ENCODE measurements at regions of chr5 and their contacts with region 1.

Region 1: GRCh38 chr5:137778772-137779564 is 24.8 kb upstream of the HNRNPA0 start:
- DNase-seq: no peak
- ATAC-seq: no peak
- H3K4me3 ChIP-seq: no peak overlapping the region
- H3K27ac ChIP-seq: no peak overlapping the region
- H3K4me1 ChIP-seq: no peaks in the 10 kb centered on the region
- H3K27me3 ChIP-seq: no peaks in the 10 kb centered on the region

Region 2: DNA sequence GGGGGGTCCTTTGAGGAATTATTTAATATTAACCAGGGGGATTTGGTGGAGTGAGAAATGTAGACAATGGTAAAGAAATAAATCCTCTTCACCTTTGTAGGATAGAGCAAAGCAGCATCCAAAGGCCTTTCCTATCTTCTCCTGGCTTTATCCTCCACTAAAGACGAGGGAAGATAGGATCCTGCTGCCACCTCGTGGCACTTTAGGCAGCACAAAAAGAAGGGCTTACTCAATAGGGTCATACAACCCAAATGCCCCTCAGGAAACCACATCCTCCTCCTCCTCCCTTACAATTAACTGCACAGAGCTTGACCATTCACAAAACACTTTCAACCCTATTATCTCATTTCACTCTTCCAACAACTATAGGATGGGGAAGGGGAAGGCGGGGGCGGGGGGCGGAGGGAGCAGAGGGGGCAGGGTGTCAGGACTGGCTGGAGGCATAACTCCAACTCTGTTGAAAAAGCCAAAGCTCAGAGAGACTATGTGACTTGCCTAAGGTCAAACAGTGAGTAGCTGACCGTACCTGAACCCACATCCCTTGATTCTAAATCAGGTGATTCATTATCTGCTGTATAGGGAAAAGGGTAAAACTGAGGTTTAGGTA is 43.3 kb after region 1 on chr5:
- intact Hi-C with region 1: loop called in 1 of 4 experiments (anchors 5 kb)
- DNase-seq: peak in 1 of 3 donors; percentile 61
- ATAC-seq: peak; percentile 72 to 74
- H3K4me3 ChIP-seq: no peak overlapping the region
- H3K27ac ChIP-seq: no peak overlapping the region
- H3K4me1 ChIP-seq: peaks cover 1% of the 10 kb centered on the region
- H3K27me3 ChIP-seq: no peaks in the 10 kb centered on the region